ENCODE measurements at regions of chr10 and their contacts with region 1.

Region 1: GRCh38 chr10:9342885-9343570 is 1288.5 kb downstream of the GATA3 start:
- DNase-seq: peak; percentile 42
- H3K4me3 ChIP-seq: no peak overlapping the region
- H3K27ac ChIP-seq: no peak overlapping the region
- H3K4me1 ChIP-seq: no peaks in the 10 kb centered on the region
- H3K27me3 ChIP-seq: no peaks in the 10 kb centered on the region
- CTCF ChIP-seq: peak; percentile 48 to 59
- POLR2A ChIP-seq: no peak

Region 2: DNA sequence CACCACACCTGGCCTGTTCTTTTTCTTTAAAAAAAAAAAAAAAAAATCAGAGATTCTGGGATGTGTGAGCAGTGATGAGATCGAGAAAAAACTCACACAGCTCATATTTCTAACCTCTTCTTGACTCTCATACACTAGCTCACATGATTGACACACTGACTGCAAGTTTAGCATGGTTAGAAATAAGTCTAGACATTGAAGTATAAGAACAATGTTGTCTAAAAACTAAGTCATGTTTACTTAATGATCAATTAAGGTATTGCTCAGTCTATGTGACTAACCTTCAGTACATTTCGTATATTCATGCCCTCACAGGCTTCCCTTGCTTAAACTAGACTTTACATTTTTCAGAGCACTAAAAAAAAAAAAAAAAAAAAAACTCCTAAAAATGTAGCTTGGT is 513.4 kb before region 1 on chr10:
- CTCF ChIA-PET with region 1: no interaction called
- POLR2A ChIA-PET with region 1: no interaction called
- dilution Hi-C with region 1: no loop called
- intact Hi-C with region 1: no loop called
- DNase-seq: no peak
- H3K4me3 ChIP-seq: no peak overlapping the region
- H3K27ac ChIP-seq: no peak overlapping the region
- H3K4me1 ChIP-seq: peaks cover 2% of the 10 kb centered on the region
- H3K27me3 ChIP-seq: no peaks in the 10 kb centered on the region
- CTCF ChIP-seq: no peak
- POLR2A ChIP-seq: no peak

Region 3: DNA sequence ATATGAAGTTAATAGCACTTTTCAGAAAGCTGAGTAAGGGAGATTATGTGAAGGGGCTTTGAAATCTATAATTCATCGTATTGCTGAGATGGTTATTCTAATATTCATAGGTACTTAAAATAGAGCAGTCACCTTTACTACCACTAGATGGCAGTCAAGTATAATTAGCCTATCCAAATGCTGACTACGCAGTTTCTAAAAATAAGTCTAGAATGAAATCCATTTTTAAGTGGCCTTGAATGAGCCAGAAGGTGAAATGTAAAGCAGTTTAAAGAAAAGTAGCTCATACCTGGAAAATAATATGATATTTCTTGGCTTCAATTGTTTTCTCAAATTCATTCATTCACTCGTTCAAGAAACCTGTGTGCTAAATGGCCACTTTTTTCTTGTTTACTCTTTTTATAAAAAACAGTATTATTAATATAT is 11.4 kb before region 1 on chr10:
- CTCF ChIA-PET with region 1: interaction called, 11 read pairs
- POLR2A ChIA-PET with region 1: no interaction called
- dilution Hi-C with region 1: no loop called
- intact Hi-C with region 1: no loop called
- DNase-seq: peak; percentile 62
- H3K4me3 ChIP-seq: no peak overlapping the region
- H3K27ac ChIP-seq: no peak overlapping the region
- H3K4me1 ChIP-seq: no peaks in the 10 kb centered on the region
- H3K27me3 ChIP-seq: peaks cover 0 to 2% of the 10 kb centered on the region in 2 experiments
- CTCF ChIP-seq: peak; percentile 37 to 54
- POLR2A ChIP-seq: no peak

Region 4: DNA sequence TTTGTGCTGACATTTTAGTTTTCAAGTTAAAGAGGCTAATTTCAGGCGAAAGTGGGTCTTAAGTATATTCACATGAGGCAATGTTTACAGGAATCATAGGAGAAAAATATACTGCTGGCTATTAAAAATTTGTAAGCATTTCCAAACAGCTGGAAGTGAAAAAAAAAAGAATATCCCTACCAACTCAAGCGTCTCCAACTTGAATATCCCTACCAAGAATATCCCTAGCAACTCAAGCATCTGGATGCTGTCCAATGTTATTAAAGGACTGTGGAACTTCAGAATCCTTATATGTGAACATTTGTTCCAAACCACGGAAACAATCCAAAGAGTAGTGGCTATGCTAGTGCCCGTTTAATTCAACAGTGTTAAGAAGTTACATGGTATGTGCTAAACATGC is 14.4 kb after region 1 on chr10:
- CTCF ChIA-PET with region 1: interaction called, 11 read pairs
- POLR2A ChIA-PET with region 1: no interaction called
- dilution Hi-C with region 1: no loop called
- intact Hi-C with region 1: no loop called
- DNase-seq: no peak
- H3K4me3 ChIP-seq: no peak overlapping the region
- H3K27ac ChIP-seq: no peak overlapping the region
- H3K4me1 ChIP-seq: no peaks in the 10 kb centered on the region
- H3K27me3 ChIP-seq: no peaks in the 10 kb centered on the region
- CTCF ChIP-seq: no peak
- POLR2A ChIP-seq: no peak

Region 5: DNA sequence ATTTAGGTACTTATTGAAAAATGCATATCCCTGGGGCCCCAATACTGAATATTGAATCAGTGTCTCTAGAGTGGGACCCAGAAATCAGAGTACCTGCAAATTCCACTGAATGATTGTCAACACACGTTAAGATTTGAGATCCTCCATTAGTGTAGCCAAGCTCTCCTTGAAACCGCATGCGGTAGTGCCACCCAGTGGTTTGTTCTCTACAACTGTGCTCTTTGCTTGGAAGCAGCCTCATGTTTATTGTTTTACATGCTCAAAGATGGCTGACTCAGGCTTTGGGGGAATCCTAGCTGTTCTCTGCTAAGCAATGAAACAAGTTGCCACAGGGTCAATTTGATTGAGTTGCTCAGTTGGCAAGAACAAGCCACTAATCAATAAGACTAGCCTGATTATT is 1334.5 kb after region 1 on chr10:
- CTCF ChIA-PET with region 1: interaction called, 46 read pairs
- POLR2A ChIA-PET with region 1: no interaction called
- dilution Hi-C with region 1: no loop called
- intact Hi-C with region 1: loop called (anchors 2 kb)
- DNase-seq: peak; percentile 50
- H3K4me3 ChIP-seq: no peak overlapping the region
- H3K27ac ChIP-seq: no peak overlapping the region
- H3K4me1 ChIP-seq: no peaks in the 10 kb centered on the region
- H3K27me3 ChIP-seq: no peaks in the 10 kb centered on the region
- CTCF ChIP-seq: peak; percentile 19 to 25
- POLR2A ChIP-seq: no peak

Measured in endothelial cell of umbilical vein (primary cell).